Activated CD4-positive, alpha-beta T cell treated with anti-CD3 and anti-CD28 coated beads for 36 hours (primary cell): ENCODE measurements at regions of chr1 and their contacts with region 1.

Region 1: GRCh38 chr1:150629115-150629928 is at the start of gene ENSA:
- DNase-seq: peak; percentile 97
- ATAC-seq: peak; percentile 89
- H3K4me3 Mint-ChIP-seq: no peak within 1 kb of the TSS
- H3K27ac Mint-ChIP-seq: no peak within 1 kb of the TSS
- H3K4me1 Mint-ChIP-seq: peaks cover 29% of the 10 kb centered on the region
- H3K27me3 Mint-ChIP-seq: no peaks in the 10 kb centered on the region
- total RNA-seq, gene ENSA: 197 to 240 TPM

Region 2: GRCh38 chr1:150321826-150322166 is 307.5 kb before region 1 on chr1:
- CTCF ChIA-PET with region 1: no interaction called
- POLR2A ChIA-PET with region 1: no interaction called
- intact Hi-C with region 1: loop called in 1 of 2 experiments (anchors 1 kb)
- DNase-seq: no peak
- ATAC-seq: no peak
- H3K4me3 Mint-ChIP-seq: peak overlapping the region; percentile 93
- H3K27ac Mint-ChIP-seq: peak overlapping the region; percentile 100
- H3K4me1 Mint-ChIP-seq: peaks cover 27% of the 10 kb centered on the region
- H3K27me3 Mint-ChIP-seq: no peaks in the 10 kb centered on the region

Region 3: GRCh38 chr1:150332651-150333290 is 296.6 kb before region 1 on chr1:
- CTCF ChIA-PET with region 1: no interaction called
- POLR2A ChIA-PET with region 1: no interaction called
- intact Hi-C with region 1: no loop called
- DNase-seq: no peak
- ATAC-seq: peak; percentile 55
- H3K4me3 Mint-ChIP-seq: no peak overlapping the region
- H3K27ac Mint-ChIP-seq: no peak overlapping the region
- H3K4me1 Mint-ChIP-seq: peaks cover 10% of the 10 kb centered on the region
- H3K27me3 Mint-ChIP-seq: no peaks in the 10 kb centered on the region

Region 4: GRCh38 chr1:150486964-150487762 is 142.2 kb before region 1 on chr1 and contains the start of gene TARS2:
- CTCF ChIA-PET with region 1: no interaction called
- POLR2A ChIA-PET with region 1: no interaction called
- intact Hi-C with region 1: loop called (anchors 1 to 10 kb)
- DNase-seq: peak; percentile 96
- ATAC-seq: peak; percentile 100
- H3K4me3 Mint-ChIP-seq: peak within 1 kb of the TSS; percentile 96
- H3K27ac Mint-ChIP-seq: peak within 1 kb of the TSS; percentile 99
- H3K4me1 Mint-ChIP-seq: peaks cover 13% of the 10 kb centered on the region
- H3K27me3 Mint-ChIP-seq: no peaks in the 10 kb centered on the region
- total RNA-seq, gene TARS2: 43.8 to 58.6 TPM

Region 5: GRCh38 chr1:150567717-150568593 is 61.4 kb before region 1 on chr1:
- CTCF ChIA-PET with region 1: interaction called, 461 read pairs
- POLR2A ChIA-PET with region 1: interaction called, 83 read pairs
- intact Hi-C with region 1: loop called (anchors 1 kb)
- DNase-seq: peak; percentile 76
- ATAC-seq: peak; percentile 24
- H3K4me3 Mint-ChIP-seq: peak overlapping the region; percentile 73
- H3K27ac Mint-ChIP-seq: peak overlapping the region; percentile 99
- H3K4me1 Mint-ChIP-seq: peaks cover 95% of the 10 kb centered on the region
- H3K27me3 Mint-ChIP-seq: no peaks in the 10 kb centered on the region

Region 6: DNA sequence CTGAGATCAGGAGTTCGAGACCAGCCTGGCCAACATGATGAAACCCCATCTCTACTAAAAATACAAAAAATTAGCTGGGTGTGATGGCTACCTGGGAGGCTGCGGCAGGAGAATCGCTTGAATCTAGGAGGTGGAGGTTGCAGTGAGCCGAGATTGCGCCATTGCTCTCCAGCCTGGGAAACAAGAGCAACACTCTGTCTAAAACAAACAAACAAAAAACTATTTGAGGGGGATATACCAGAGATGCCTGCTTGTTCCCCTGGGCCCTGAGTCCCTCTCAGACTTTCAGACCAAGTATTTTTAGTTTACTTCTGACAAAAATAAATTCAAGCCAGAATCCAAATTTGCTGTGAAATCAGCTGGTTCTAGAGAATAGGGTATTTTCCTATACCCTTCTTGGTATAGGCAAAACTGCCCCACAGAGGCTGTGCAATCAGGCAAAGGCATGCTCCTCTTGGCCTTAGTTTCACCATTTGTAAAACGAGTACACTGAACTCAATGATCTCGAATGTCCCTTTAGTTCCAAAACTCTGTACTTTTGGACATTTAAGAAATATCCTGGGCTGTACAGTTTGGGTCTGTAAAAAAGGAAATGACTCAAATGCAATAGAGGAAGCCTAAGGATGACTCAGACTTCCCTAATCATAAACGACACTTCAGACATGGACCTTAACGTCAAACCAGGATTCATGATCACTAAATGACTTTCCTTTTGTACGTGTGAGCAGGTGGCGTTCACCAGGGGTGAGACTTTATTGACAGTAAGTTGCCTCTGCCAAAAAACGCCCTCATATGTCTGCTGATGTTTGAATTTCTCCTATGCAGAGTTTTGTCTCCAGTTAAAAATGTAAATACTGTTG is 16.0 kb before region 1 on chr1:
- CTCF ChIA-PET with region 1: interaction called, 5 read pairs
- POLR2A ChIA-PET with region 1: interaction called, 22 read pairs
- intact Hi-C with region 1: loop called (anchors 1 kb)
- DNase-seq: peak; percentile 78
- ATAC-seq: peak; percentile 63
- H3K4me3 Mint-ChIP-seq: peak overlapping the region; percentile 60
- H3K27ac Mint-ChIP-seq: peak overlapping the region; percentile 90
- H3K4me1 Mint-ChIP-seq: peaks cover 67% of the 10 kb centered on the region
- H3K27me3 Mint-ChIP-seq: no peaks in the 10 kb centered on the region

Region 7: DNA sequence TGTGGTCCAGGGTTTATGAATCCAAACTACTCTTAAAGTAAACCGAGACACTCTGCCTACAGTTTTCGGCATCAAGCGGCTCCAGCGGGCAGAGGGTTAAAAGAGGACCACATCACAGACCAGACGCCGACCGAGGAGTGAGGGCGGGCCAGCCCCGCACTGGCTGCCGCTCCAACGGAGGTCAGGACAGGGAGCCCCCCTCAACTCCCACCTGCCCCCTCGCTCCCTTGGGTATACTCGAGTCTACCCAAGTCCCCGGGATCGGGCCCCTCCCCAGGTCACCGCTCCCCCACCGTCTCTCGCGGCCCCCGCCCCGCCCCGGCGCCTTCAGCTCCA is 246.8 kb after region 1 on chr1:
- CTCF ChIA-PET with region 1: no interaction called
- POLR2A ChIA-PET with region 1: no interaction called
- intact Hi-C with region 1: loop called in 1 of 2 experiments (anchors 1 kb)
- DNase-seq: no peak
- ATAC-seq: peak; percentile 37
- H3K4me3 Mint-ChIP-seq: peak overlapping the region; percentile 88
- H3K27ac Mint-ChIP-seq: peak overlapping the region; percentile 95
- H3K4me1 Mint-ChIP-seq: peaks cover 25% of the 10 kb centered on the region
- H3K27me3 Mint-ChIP-seq: no peaks in the 10 kb centered on the region

Region 8: GRCh38 chr1:151165738-151166505 is 536.6 kb after region 1 on chr1 and contains the starts of genes LYSMD1 and SCNM1:
- CTCF ChIA-PET with region 1: no interaction called
- POLR2A ChIA-PET with region 1: no interaction called
- intact Hi-C with region 1: loop called in 1 of 2 experiments (anchors 1 kb)
- DNase-seq: peak; percentile 98
- ATAC-seq: peak; percentile 96
- H3K4me3 Mint-ChIP-seq: peak within 1 kb of the TSS; percentile 92
- H3K27ac Mint-ChIP-seq: peak within 1 kb of the TSS; percentile 98
- H3K4me1 Mint-ChIP-seq: peaks cover 48% of the 10 kb centered on the region
- H3K27me3 Mint-ChIP-seq: no peaks in the 10 kb centered on the region
- total RNA-seq, gene LYSMD1: 4.3 to 5.1 TPM
- total RNA-seq, gene SCNM1: 64.3 to 90.8 TPM